Vagina (tissue), 2 donors: ENCODE measurements at regions of chr6 and their contacts with region 1.

Region 1: DNA sequence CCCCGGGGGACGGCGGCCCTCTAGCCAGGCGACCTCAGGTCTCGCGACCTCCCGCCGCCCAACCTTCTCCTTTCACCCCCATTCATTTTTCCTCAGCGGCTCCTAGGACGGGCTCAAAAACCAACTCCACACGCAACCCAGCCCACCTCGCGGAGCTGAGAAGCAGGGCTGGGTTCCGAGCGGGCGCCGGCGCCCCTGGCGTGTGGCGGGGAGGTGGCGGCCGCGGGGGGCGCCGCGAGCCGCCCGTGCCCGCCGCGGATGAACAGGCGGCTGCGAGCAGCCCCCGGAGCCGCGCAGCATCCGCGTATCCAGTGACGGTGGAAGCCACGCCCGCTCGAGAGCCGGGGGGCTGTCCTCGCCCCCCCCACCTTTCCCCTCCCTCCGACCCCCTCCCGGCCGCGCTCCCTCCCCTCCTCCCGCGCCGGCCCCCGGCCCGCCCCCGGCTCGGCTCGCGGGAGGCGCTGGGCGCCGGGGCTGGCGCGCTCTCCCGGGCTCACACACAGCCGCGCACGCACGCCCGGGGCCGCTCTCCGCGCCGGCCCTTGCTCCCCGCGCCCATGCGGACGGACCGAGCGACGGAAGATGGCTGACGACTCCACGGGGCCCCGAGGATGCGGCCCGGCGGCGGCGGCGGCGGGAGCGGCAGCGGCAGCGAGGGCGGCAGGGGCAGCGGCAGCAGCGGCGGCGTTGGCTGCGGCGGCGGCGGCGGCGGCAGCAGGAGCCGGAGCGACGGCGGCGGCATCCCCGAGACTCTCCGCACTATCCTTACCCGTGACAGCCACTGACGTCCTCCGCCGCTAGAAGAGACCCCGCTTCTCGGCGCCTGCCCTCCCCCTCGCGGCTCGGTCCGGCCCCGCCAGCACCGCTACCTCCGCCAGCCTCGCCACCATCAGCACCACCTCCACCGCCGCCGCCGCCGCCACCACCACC is at the start of gene SOBP:
- DNase-seq: no peak
- H3K4me3 ChIP-seq: peak within 1 kb of the TSS; percentile 72
- H3K27ac ChIP-seq: peak within 1 kb of the TSS; percentile 88
- H3K4me1 ChIP-seq: peaks cover 31% of the 10 kb centered on the region
- H3K27me3 ChIP-seq: no peaks in the 10 kb centered on the region
- CTCF ChIP-seq: no peak
- POLR2A ChIP-seq: peak in 1 of 2 donors; percentile 51
- total RNA-seq, gene SOBP: 13.3 TPM

Region 2: DNA sequence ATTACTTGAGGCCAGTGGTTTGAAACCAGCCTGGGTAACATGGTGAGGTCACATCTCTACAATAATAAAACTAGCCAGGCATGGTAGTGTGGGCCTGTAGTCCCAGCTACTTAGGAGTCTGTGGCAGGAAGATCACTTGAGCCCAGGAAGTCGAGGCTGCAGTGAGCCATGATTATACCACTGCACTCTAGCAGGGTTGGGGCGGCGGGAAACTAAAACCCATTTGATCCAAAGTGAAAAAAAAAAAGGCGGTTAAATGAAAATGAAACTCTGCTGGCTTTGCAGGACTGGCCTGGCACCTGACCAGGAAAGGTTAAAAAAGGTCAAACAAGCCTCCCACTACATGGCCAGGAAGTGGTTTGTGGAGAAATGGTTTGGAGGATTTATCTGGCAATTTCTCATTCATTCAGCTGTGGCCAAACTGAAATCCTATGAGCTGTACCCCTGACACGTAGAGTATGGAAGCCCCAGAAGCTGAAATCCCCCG is 425.3 kb before region 1 on chr6:
- intact Hi-C with region 1: no loop called
- DNase-seq: no peak
- H3K4me3 ChIP-seq: no peak overlapping the region
- H3K27ac ChIP-seq: no peak overlapping the region
- H3K4me1 ChIP-seq: peaks cover 9% of the 10 kb centered on the region
- H3K27me3 ChIP-seq: no peaks in the 10 kb centered on the region
- CTCF ChIP-seq: no peak
- POLR2A ChIP-seq: no peak

Region 3: GRCh38 chr6:107668743-107669474 is 179.0 kb after region 1 on chr6:
- intact Hi-C with region 1: loop called (anchors 10 kb)
- DNase-seq: no peak
- H3K4me3 ChIP-seq: no peak overlapping the region
- H3K27ac ChIP-seq: no peak overlapping the region
- H3K4me1 ChIP-seq: peaks cover 9% of the 10 kb centered on the region
- H3K27me3 ChIP-seq: no peaks in the 10 kb centered on the region
- CTCF ChIP-seq: no peak
- POLR2A ChIP-seq: no peak